Stomach (tissue), 19 donors: ENCODE measurements at regions of chr1 and their contacts with region 1.

Region 1: DNA sequence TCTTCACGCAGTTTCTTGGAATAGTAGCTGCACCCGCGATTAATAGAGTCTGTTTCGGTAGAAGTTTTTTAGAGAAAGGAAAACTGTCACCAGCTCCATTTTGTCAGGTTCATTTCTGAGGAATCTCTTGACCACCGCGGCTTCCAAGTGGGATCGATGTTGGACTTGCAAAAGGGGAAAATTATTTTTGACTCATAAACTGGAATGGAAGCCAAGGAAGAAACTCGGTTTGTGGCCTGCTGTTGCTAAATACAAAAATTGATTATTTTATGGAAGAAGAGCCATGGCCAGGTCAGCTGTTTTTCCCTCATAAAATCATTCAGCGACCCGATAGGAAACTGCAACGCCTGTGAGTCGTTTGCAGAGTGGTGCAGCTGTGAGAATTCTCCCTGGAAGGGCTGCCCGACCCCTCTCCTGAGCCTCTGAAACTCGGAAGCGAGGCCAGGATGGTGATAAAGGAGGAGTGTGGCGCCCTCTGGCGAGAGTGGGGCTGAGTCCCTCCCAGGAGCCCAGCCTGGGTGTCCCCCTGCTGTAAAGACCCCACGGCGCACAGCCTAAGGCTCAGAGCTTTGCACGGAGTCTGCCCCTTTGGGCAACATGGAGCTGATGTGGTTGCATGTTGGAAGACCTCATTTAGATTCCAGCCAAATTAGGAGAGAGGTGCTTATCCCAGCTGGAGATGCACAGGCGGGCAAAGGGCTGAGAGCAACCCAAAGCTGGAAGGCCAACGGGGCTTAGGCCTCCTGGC is 83.6 kb upstream of the SLC25A33 start:
- DNase-seq: peak; percentile 73 to 89
- H3K4me3 ChIP-seq: no peak overlapping the region
- H3K27ac ChIP-seq: peak overlapping the region in 1 of 5 donors; percentile 3
- H3K4me1 ChIP-seq: peaks cover 0 to 15% (median 3%) of the 10 kb centered on the region in 4 donors
- H3K27me3 ChIP-seq: peaks cover 0 to 3% (median 0%) of the 10 kb centered on the region in 3 donors
- CTCF ChIP-seq: peak in 5 of 7 experiments; percentile 60 to 78 (median 75)
- EP300 ChIP-seq: no peak
- POLR2A ChIP-seq: no peak

Region 2: DNA sequence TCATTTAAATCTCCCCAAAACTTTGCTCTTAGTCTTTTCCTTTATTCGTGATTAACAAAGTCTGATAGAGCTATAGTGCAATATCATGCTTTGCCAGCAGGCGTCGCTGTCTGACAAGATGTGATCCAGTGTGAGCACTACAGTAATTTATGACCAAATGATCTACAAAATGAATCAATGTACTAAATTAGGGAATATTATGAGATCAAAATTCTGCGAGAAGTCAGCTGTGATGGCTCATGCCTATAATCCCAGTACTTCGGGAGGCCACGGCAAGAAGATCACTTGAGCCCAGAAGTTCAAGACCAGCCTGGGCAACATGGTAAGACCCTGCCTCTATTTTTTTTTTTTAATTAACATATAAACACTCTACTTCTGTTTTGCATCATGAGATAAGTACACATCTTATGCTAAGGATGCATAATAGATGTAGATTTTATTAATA is 166.5 kb before region 1 on chr1:
- intact Hi-C with region 1: loop called (anchors 10 kb)
- DNase-seq: peak; percentile 76 to 89
- H3K4me3 ChIP-seq: no peak overlapping the region
- H3K27ac ChIP-seq: peak overlapping the region in 3 of 5 donors; percentile 93 to 98 (median 96)
- H3K4me1 ChIP-seq: peaks cover 15 to 37% (median 24%) of the 10 kb centered on the region in 4 donors
- H3K27me3 ChIP-seq: no peaks in the 10 kb centered on the region
- CTCF ChIP-seq: peak in 5 of 7 experiments; percentile 88 to 97 (median 93)
- EP300 ChIP-seq: no peak
- POLR2A ChIP-seq: no peak

Region 3: DNA sequence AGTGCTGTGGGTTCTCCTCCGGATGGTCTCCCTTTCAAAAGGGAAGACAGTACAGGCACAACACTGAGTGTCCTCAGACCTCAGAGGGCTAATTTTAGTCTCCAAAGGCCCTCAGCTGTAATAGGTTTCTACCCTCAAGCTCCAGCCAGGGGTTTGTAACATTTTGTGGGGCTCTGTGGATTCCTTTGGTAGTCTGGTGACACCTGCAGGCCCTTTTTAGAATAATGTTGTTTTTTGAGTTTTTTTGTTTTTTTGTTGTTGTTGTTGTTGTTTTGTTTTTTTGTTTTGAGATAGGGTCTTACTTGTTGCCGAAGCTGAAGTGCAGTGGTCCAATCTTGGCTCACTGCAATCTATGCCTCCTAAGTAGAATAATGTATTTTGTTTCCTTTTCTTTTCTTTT is 118.1 kb after region 1 on chr1:
- intact Hi-C with region 1: no loop called
- DNase-seq: peak in 1 of 2 donors; percentile 30
- H3K4me3 ChIP-seq: no peak overlapping the region
- H3K27ac ChIP-seq: no peak overlapping the region
- H3K4me1 ChIP-seq: no peaks in the 10 kb centered on the region
- H3K27me3 ChIP-seq: no peaks in the 10 kb centered on the region
- CTCF ChIP-seq: peak in 3 of 7 experiments; percentile 13 to 22 (median 22)
- EP300 ChIP-seq: no peak
- POLR2A ChIP-seq: no peak